ENCODE measurements at regions of chr9 and their contacts with region 1.

Region 1: GRCh38 chr9:98974994-98975712 is 31.4 kb downstream of the COL15A1 start:
- DNase-seq: peak; percentile 75 to 86
- ATAC-seq: peak; percentile 90 to 97
- H3K4me3 ChIP-seq: peak overlapping the region; percentile 24; the same call in 2 of the 3 replicates
- H3K27ac ChIP-seq: peak overlapping the region in 1 of 2 experiments; percentile 31; a peak in 1 of 6 replicates
- H3K4me1 ChIP-seq: peaks cover 4% of the 10 kb centered on the region; the same call in 1 of the 3 replicates
- CTCF ChIP-seq: peak; percentile 82
- EP300 ChIP-seq: no peak
- POLR2A ChIP-seq: no peak
- RAD21 ChIP-seq: peak; percentile 73 to 82

Region 2: GRCh38 chr9:98627296-98627695 is 347.9 kb before region 1 on chr9:
- CTCF ChIA-PET with region 1: no interaction called
- POLR2A ChIA-PET with region 1: no interaction called
- DNase-seq: no peak
- ATAC-seq: no peak
- H3K4me3 ChIP-seq: no peak overlapping the region
- H3K27ac ChIP-seq: no peak overlapping the region
- H3K4me1 ChIP-seq: no peaks in the 10 kb centered on the region
- CTCF ChIP-seq: no peak
- EP300 ChIP-seq: no peak
- POLR2A ChIP-seq: no peak
- RAD21 ChIP-seq: no peak

Region 3: DNA sequence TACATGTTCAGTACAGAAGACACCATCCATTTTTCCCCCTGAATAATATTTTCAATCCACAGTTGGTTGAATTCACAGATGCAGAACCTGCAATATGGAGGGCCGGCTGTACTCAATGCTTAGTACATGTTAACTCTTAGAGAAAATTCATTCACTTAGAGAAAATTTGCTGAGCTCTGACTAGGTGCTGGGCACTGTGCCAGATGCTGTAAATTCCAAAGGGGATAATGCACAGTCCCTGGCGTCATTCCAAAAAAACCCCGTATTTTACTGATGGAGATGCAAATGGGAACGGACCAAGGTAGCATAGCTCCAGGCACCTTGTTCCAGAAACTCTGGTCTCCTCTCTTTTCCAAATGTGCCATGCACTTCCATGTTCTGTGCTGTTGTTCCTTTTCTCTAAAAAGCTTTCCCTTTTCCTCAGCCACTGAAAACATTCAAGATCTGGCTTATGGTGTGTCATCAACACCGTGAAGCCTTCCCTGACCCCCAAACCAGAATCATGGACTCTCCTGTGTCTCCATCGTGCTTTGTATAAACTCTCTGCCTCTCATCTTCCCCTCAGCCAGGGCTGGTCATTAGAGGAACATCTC is 87.1 kb before region 1 on chr9:
- CTCF ChIA-PET with region 1: no interaction called
- POLR2A ChIA-PET with region 1: no interaction called
- DNase-seq: no peak
- ATAC-seq: no peak
- H3K4me3 ChIP-seq: no peak overlapping the region
- H3K27ac ChIP-seq: no peak overlapping the region
- H3K4me1 ChIP-seq: no peaks in the 10 kb centered on the region
- CTCF ChIP-seq: no peak
- EP300 ChIP-seq: no peak
- POLR2A ChIP-seq: no peak
- RAD21 ChIP-seq: no peak

Region 4: GRCh38 chr9:98951967-98952366 is 23.2 kb before region 1 on chr9:
- CTCF ChIA-PET with region 1: interaction called, 13 read pairs
- POLR2A ChIA-PET with region 1: no interaction called
- DNase-seq: no peak
- ATAC-seq: no peak
- H3K4me3 ChIP-seq: no peak overlapping the region
- H3K27ac ChIP-seq: no peak overlapping the region
- H3K4me1 ChIP-seq: no peaks in the 10 kb centered on the region
- CTCF ChIP-seq: no peak
- EP300 ChIP-seq: no peak
- POLR2A ChIP-seq: no peak
- RAD21 ChIP-seq: no peak

Region 5: DNA sequence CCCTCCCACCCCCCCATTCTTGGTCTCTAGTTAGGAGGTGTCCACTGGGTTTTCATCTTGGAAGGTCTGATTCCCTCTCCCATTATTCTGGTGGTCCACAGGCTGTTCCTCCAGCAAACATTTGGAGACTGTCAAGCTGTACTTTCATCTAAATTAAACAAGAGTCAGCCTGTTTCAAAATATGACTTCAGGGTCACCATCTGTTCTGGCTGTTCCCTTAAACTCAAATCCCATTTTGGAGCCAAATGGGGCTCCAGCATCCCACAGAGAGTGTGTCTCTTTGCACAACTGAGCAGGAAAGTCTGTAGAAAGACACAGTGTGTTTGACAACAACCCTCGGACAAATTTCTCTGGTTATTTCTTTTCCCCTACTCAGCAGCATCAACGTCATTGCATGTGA is 11.0 kb before region 1 on chr9:
- CTCF ChIA-PET with region 1: interaction called, 24 read pairs
- POLR2A ChIA-PET with region 1: no interaction called
- DNase-seq: no peak
- ATAC-seq: no peak
- H3K4me3 ChIP-seq: no peak overlapping the region
- H3K27ac ChIP-seq: no peak overlapping the region
- H3K4me1 ChIP-seq: no peaks in the 10 kb centered on the region
- CTCF ChIP-seq: no peak
- EP300 ChIP-seq: no peak
- POLR2A ChIP-seq: no peak
- RAD21 ChIP-seq: no peak

Region 6: GRCh38 chr9:98989036-98990000 is 14.2 kb after region 1 on chr9:
- CTCF ChIA-PET with region 1: interaction called, 125 read pairs
- POLR2A ChIA-PET with region 1: interaction called, 4 read pairs
- DNase-seq: peak; percentile 84 to 86
- ATAC-seq: peak; percentile 91 to 97
- H3K4me3 ChIP-seq: no peak overlapping the region
- H3K27ac ChIP-seq: peak overlapping the region; percentile 72 to 78
- H3K4me1 ChIP-seq: peaks cover 35% of the 10 kb centered on the region
- CTCF ChIP-seq: peak; percentile 20; the same call in 1 of the 3 replicates
- EP300 ChIP-seq: peak in 1 of 2 experiments; percentile 33; a peak in 1 of 5 replicates
- POLR2A ChIP-seq: no peak
- RAD21 ChIP-seq: peak in 1 of 2 experiments; percentile 38; a peak in 2 of 5 replicates

Region 7: GRCh38 chr9:100368672-100369071 is 1393.5 kb after region 1 on chr9:
- CTCF ChIA-PET with region 1: no interaction called
- POLR2A ChIA-PET with region 1: no interaction called
- DNase-seq: no peak
- ATAC-seq: no peak
- H3K4me3 ChIP-seq: no peak overlapping the region
- H3K27ac ChIP-seq: no peak overlapping the region
- H3K4me1 ChIP-seq: 0 out of 3 replicates have a peak, but pooled peaks cover 4% of the 10 kb centered on the region
- CTCF ChIP-seq: no peak
- EP300 ChIP-seq: no peak
- POLR2A ChIP-seq: no peak
- RAD21 ChIP-seq: no peak